A549 (cell line): ENCODE measurements at regions of chr22 and their contacts with region 1.

Region 1: GRCh38 chr22:22408731-22409696 is 99.5 kb downstream of the ZNF280B start:
- DNase-seq: peak; percentile 15 to 33
- ATAC-seq: peak; percentile 95 to 96
- H3K4me3 ChIP-seq: no peak overlapping the region
- H3K27ac ChIP-seq: no peak overlapping the region
- H3K4me1 ChIP-seq: no peaks in the 10 kb centered on the region
- CTCF ChIP-seq: peak; percentile 38
- EP300 ChIP-seq: no peak
- POLR2A ChIP-seq: no peak
- RAD21 ChIP-seq: peak; percentile 24 to 28; a peak in 1 of 5 replicates

Region 2: GRCh38 chr22:22388090-22388489 is 20.9 kb before region 1 on chr22:
- CTCF ChIA-PET with region 1: no interaction called
- POLR2A ChIA-PET with region 1: no interaction called
- DNase-seq: no peak
- ATAC-seq: no peak
- H3K4me3 ChIP-seq: no peak overlapping the region
- H3K27ac ChIP-seq: no peak overlapping the region
- H3K4me1 ChIP-seq: no peaks in the 10 kb centered on the region
- CTCF ChIP-seq: no peak
- EP300 ChIP-seq: no peak
- POLR2A ChIP-seq: no peak
- RAD21 ChIP-seq: no peak

Region 3: GRCh38 chr22:22422629-22423112 is 13.7 kb after region 1 on chr22:
- CTCF ChIA-PET with region 1: interaction called, 10 read pairs
- POLR2A ChIA-PET with region 1: no interaction called
- DNase-seq: peak; percentile 13 to 63
- ATAC-seq: peak; percentile 59 to 75; a peak in 4 of 6 replicates
- H3K4me3 ChIP-seq: no peak overlapping the region
- H3K27ac ChIP-seq: no peak overlapping the region
- H3K4me1 ChIP-seq: no peaks in the 10 kb centered on the region
- CTCF ChIP-seq: peak; percentile 56
- EP300 ChIP-seq: no peak
- POLR2A ChIP-seq: no peak
- RAD21 ChIP-seq: peak in 1 of 2 experiments; percentile 24; a peak in 1 of 5 replicates